CD4-positive, alpha-beta memory T cell (primary cell): ENCODE measurements at regions of chr19 and their contacts with region 1.

Region 1: DNA sequence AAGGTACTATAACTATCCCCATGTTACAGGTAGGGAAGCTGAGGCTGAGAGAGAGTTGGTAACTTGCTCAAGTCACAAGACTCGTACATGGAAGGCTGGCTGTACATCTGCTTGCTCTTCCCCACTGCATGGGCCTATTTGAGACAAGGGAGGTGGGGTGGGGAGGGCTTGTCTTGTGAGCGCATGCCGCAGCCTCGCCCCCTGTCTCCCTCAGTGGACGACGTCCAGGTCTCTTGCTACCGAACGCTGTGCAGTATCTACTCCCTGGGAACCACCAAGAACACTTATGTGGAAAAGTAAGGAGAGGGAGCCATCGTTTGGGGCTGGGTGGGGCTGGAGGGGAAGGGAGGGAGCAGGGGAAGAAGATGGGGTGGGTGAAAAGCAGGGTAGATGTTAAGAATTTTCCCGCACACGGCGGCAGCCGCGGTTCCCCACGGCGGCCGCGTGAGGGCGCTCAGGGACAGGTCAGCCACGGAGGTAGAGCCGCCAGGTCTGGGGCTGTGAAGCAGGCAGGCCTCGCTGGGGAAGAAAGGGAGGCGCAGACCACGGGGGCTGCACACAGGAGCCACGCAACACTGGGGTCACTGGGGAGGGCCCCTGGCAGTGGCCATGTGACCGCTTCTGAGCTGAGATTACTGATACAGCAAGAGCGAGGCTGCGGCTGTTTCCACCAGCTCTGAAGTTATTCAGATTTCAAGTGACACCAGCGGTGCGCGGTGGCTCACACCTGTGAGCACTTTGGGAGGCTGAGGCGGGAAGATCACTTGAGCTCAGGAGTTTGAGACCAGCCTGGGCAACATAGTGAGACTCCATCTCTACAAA is 81.5 kb downstream of the RYR1 start:
- DNase-seq: peak; percentile 74 to 79 (median 77)
- H3K4me3 ChIP-seq: no peak overlapping the region
- H3K4me3 Mint-ChIP-seq: peak overlapping the region in 3 of 8 donors; percentile 20 to 45 (median 22)
- H3K27ac ChIP-seq: no peak overlapping the region
- H3K27ac Mint-ChIP-seq: peak overlapping the region in 5 of 7 donors; percentile 35 to 57 (median 43)
- H3K4me1 ChIP-seq: peaks cover 19% of the 10 kb centered on the region
- H3K4me1 Mint-ChIP-seq: peaks cover 9 to 22% (median 16%) of the 10 kb centered on the region in 4 donors
- H3K27me3 ChIP-seq: no peaks in the 10 kb centered on the region
- H3K27me3 Mint-ChIP-seq: peaks cover 0 to 2% of the 10 kb centered on the region in 2 donors

Region 2: DNA sequence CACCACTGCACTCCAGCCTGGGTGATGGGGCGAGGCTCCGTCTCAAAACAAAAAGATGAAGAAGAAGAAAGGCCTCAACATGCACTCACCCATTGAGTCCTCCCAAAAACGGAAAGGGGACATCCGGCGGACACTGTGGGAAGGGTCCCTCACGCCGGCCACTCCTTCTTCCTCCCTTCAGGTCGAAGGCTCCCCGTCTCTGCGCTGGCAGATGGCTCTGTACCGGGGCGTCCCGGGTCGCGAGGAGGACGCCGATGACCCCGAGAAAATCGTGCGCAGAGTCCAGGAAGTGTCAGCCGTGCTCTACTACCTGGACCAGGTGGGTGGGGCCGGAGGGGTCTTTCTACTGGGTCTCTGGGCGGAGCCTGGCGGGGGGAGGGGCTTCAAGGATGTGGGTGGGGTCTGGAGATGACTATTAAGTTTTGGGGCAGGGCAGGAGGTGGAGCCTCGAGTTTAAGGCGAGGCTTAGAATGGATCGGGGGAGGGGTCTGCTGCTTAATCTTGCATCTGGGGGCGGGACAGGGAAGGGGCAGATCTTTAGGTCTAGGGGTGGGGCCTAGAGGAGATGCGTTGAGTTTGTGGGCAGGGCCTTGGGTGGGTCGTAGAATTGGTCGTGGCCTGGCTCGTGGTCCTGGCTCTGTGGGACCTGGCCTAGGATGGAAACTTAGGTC is 12.6 kb after region 1 on chr19:
- CTCF ChIA-PET with region 1: interaction called, 47 read pairs
- POLR2A ChIA-PET with region 1: interaction called, 9 read pairs
- intact Hi-C with region 1: no loop called
- DNase-seq: peak in 1 of 5 donors; percentile 40
- H3K4me3 ChIP-seq: no peak overlapping the region
- H3K4me3 Mint-ChIP-seq: peak overlapping the region in 1 of 8 donors; percentile 5
- H3K27ac ChIP-seq: no peak overlapping the region
- H3K27ac Mint-ChIP-seq: peak overlapping the region in 2 of 7 donors; percentile 23 to 57
- H3K4me1 ChIP-seq: no peaks in the 10 kb centered on the region
- H3K4me1 Mint-ChIP-seq: peaks cover 0 to 5% (median under 1%) of the 10 kb centered on the region in 4 donors
- H3K27me3 ChIP-seq: no peaks in the 10 kb centered on the region
- H3K27me3 Mint-ChIP-seq: no peaks in the 10 kb centered on the region

Region 3: GRCh38 chr19:38538793-38539528 is 23.9 kb after region 1 on chr19:
- CTCF ChIA-PET with region 1: interaction called, 47 read pairs
- POLR2A ChIA-PET with region 1: interaction called, 6 read pairs
- intact Hi-C with region 1: loop called (anchors 1 kb)
- DNase-seq: peak; percentile 66 to 81 (median 72)
- H3K4me3 ChIP-seq: peak overlapping the region in 1 of 2 donors; percentile 33
- H3K4me3 Mint-ChIP-seq: peak overlapping the region; percentile 43 to 82 (median 69)
- H3K27ac ChIP-seq: peak overlapping the region; percentile 12
- H3K27ac Mint-ChIP-seq: peak overlapping the region; percentile 82 to 95 (median 87)
- H3K4me1 ChIP-seq: peaks cover 44% of the 10 kb centered on the region
- H3K4me1 Mint-ChIP-seq: peaks cover 24 to 61% (median 41%) of the 10 kb centered on the region in 4 donors
- H3K27me3 ChIP-seq: no peaks in the 10 kb centered on the region
- H3K27me3 Mint-ChIP-seq: no peaks in the 10 kb centered on the region

Region 4: DNA sequence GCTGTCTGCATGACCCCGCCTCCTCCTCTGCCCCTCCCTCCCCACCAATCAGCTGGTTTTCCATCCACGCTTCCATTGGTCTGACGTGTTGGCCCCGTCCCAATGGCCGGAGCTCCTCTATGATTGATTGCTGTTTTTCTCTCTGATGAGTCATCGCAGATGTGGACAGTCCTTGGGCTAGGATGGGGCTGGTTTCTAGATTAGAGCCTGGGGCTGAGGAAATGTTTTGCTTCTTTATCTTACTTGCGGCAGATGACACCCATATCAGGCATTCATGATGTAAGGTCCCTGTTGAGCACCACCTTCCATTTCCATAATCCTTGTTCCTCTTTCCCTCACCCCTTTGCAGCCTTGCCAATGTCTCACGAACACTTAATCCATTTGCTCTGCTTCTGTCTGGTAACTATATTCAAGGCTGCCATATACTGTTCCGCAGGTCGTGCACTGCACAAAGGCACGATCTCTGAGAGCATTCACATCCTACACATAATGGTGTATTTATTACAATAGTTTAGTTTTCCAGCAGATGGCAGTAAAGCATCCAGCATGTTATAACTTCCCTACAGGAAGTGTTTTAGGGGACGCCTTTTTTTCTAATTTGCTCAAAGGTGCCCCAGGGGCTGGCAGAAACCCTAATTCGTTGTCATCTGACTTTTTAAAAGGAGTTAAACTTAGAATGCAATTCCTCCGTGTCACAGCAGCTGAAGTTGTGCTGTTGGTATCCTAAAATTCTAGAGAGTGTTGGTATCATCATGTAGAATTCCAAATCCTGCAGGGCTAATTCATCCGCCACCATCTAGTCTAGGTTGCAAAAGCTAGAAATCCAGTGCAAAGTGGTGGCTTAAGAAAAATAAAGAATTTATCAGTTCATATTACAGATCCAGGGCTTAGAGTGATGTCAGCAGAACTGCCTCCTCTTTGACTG is 29.3 kb after region 1 on chr19:
- CTCF ChIA-PET with region 1: interaction called, 41 read pairs
- POLR2A ChIA-PET with region 1: interaction called, 6 read pairs
- intact Hi-C with region 1: loop called (anchors 1 kb)
- DNase-seq: peak in 4 of 5 donors; percentile 61 to 71 (median 65)
- H3K4me3 ChIP-seq: no peak overlapping the region
- H3K4me3 Mint-ChIP-seq: peak overlapping the region in 7 of 8 donors; percentile 21 to 76 (median 56)
- H3K27ac ChIP-seq: no peak overlapping the region
- H3K27ac Mint-ChIP-seq: peak overlapping the region in 4 of 7 donors; percentile 27 to 89 (median 72)
- H3K4me1 ChIP-seq: peaks cover 23% of the 10 kb centered on the region
- H3K4me1 Mint-ChIP-seq: peaks cover 15 to 32% (median 21%) of the 10 kb centered on the region in 4 donors
- H3K27me3 ChIP-seq: no peaks in the 10 kb centered on the region
- H3K27me3 Mint-ChIP-seq: no peaks in the 10 kb centered on the region

Region 5: GRCh38 chr19:38559428-38560401 is 44.7 kb after region 1 on chr19:
- CTCF ChIA-PET with region 1: interaction called, 7 read pairs
- POLR2A ChIA-PET with region 1: interaction called, 3 read pairs
- intact Hi-C with region 1: loop called (anchors 5 kb)
- DNase-seq: peak; percentile 44 to 76 (median 47)
- H3K4me3 ChIP-seq: peak overlapping the region; percentile 5 to 19
- H3K4me3 Mint-ChIP-seq: peak overlapping the region in 7 of 8 donors; percentile 11 to 82 (median 50)
- H3K27ac ChIP-seq: no peak overlapping the region
- H3K27ac Mint-ChIP-seq: peak overlapping the region in 6 of 7 donors; percentile 45 to 80 (median 65)
- H3K4me1 ChIP-seq: peaks cover 43% of the 10 kb centered on the region
- H3K4me1 Mint-ChIP-seq: peaks cover 23 to 63% (median 48%) of the 10 kb centered on the region in 4 donors
- H3K27me3 ChIP-seq: no peaks in the 10 kb centered on the region
- H3K27me3 Mint-ChIP-seq: peaks cover 0 to 3% of the 10 kb centered on the region in 2 donors